Dendritic cell treated with granulocyte-macrophage colony-stimulating factor and Interleukin-4, amounts not matched to agents 40 ng/mL and 50 ng/mL, for 4 days (primary cell): ENCODE measurements at regions of chr18 and their contacts with region 1.

Region 1: DNA sequence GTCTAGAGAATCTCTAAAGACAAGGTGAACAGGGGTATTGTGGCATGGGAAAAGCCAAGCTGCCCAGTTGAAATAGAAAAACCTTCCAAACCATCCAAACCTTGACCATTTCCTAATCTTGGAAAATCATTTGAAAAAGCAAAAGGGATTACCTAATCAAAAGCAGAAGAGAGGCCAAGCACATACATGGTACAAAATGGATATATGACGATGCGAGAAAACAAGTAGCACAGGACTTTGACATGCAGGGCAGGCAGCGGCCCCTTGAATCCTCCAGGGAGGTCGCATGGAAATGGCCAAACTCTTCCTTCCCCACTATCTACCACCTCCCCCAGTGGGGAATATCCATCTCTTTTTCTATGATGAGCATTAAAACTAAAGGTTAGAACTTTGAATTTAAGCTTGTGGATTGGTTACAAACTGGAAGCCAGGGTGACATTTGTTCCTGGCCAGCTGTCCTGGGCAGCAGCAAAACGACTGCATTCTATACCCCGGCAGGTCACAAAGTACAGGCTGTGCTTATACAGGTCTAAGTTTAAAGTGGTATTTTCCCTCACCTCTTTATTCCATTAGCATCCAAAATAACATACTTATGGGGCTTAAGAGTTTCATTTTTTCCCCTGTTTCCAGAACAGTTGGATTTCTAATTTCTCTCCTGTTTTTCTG is 24.7 kb downstream of the MYOM1 start:
- H3K4me3 Mint-ChIP-seq: no peak overlapping the region
- H3K27ac Mint-ChIP-seq: no peak overlapping the region
- H3K4me1 Mint-ChIP-seq: peaks cover 8% of the 10 kb centered on the region
- H3K27me3 Mint-ChIP-seq: no peaks in the 10 kb centered on the region

Region 2: DNA sequence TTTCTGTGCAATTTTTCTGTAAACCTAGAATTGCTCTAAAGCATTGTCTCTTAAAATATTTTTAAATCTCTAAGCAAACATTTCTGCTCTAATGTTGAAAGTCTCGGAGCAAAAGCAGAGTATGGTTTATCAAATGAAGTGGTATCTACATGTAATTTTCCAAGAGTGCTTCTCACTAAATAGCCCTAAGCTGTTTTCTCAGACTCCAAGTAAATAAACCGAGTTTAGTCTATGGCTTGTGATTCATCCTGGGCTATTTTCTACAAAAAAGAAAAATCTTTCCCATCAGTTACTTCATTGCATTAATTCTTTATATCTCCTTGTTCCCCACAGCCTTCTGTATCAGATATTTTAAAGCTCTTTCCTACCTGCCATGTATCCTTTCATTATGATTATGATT is 714.5 kb before region 1 on chr18:
- intact Hi-C with region 1: no loop called
- H3K4me3 Mint-ChIP-seq: no peak overlapping the region
- H3K27ac Mint-ChIP-seq: no peak overlapping the region
- H3K4me1 Mint-ChIP-seq: peaks cover 5% of the 10 kb centered on the region
- H3K27me3 Mint-ChIP-seq: peaks cover 13% of the 10 kb centered on the region

Region 3: GRCh38 chr18:3119401-3120335 is 75.4 kb before region 1 on chr18:
- intact Hi-C with region 1: no loop called
- H3K4me3 Mint-ChIP-seq: no peak overlapping the region
- H3K27ac Mint-ChIP-seq: no peak overlapping the region
- H3K4me1 Mint-ChIP-seq: peaks cover 8% of the 10 kb centered on the region
- H3K27me3 Mint-ChIP-seq: no peaks in the 10 kb centered on the region

Region 4: GRCh38 chr18:3151399-3152264 is 43.4 kb before region 1 on chr18:
- intact Hi-C with region 1: loop called (anchors 5 kb)
- H3K4me3 Mint-ChIP-seq: no peak overlapping the region
- H3K27ac Mint-ChIP-seq: no peak overlapping the region
- H3K4me1 Mint-ChIP-seq: peaks cover 7% of the 10 kb centered on the region
- H3K27me3 Mint-ChIP-seq: no peaks in the 10 kb centered on the region